CD4-positive, alpha-beta T cell (primary cell): ENCODE measurements at regions of chr9 and their contacts with region 1.

Region 1: DNA sequence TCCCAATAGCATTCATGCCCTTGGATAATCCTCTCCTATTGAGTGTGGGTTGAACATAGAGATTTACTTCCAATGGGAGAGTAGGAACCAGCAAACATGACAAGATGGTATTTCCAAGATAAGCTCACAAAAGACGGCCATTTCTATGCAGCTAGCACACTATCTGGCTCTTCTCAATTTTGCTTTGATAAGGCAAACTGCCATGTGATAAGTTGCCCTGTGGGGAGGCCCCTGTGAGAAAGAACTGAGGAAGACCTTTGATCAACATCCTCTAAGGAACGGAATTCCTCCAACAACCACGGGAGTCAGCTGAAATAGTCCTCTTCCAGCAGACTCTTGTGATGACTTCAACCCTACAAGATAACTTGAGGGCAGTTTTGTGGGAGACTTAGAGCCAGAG is 211.9 kb upstream of the TRPM3 start:
- DNase-seq: no peak
- ATAC-seq: no peak
- H3K4me3 ChIP-seq: no peak overlapping the region
- H3K4me3 Mint-ChIP-seq: no peak overlapping the region
- H3K27ac ChIP-seq: no peak overlapping the region
- H3K27ac Mint-ChIP-seq: no peak overlapping the region
- H3K4me1 ChIP-seq: no peaks in the 10 kb centered on the region
- H3K4me1 Mint-ChIP-seq: no peaks in the 10 kb centered on the region
- H3K27me3 ChIP-seq: peaks cover 0 to 15% of the 10 kb centered on the region in 2 experiments
- H3K27me3 Mint-ChIP-seq: peaks cover 24% of the 10 kb centered on the region
- CTCF ChIP-seq: no peak

Region 2: GRCh38 chr9:71249729-71250317 is 83.5 kb before region 1 on chr9:
- CTCF ChIA-PET with region 1: no interaction called
- POLR2A ChIA-PET with region 1: no interaction called
- intact Hi-C with region 1: no loop called
- DNase-seq: peak in 4 of 14 experiments; percentile 2 to 14 (median 10)
- ATAC-seq: no peak
- H3K4me3 ChIP-seq: no peak overlapping the region
- H3K4me3 Mint-ChIP-seq: no peak overlapping the region
- H3K27ac ChIP-seq: no peak overlapping the region
- H3K27ac Mint-ChIP-seq: no peak overlapping the region
- H3K4me1 ChIP-seq: no peaks in the 10 kb centered on the region
- H3K4me1 Mint-ChIP-seq: no peaks in the 10 kb centered on the region
- H3K27me3 ChIP-seq: no peaks in the 10 kb centered on the region
- H3K27me3 Mint-ChIP-seq: peaks cover 5% of the 10 kb centered on the region
- CTCF ChIP-seq: peak; percentile 24

Region 3: DNA sequence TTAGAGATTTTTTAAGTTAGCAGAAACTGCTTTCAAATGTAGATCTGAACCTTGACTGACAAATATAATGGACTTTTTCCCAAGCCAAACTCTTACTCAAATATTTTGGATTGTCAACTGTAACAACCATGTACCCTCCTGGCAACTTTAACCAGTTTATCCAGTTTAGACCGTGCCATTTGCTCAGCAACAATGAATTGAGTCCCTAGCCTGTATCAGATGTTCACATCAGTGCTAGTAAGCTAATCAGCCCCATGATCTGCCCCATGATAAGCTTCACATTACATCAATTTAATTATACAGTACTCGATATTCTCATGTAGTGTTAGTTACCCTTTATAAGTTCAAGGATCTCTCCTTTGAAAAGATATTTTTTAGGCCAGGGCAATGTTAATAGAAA is 64.5 kb after region 1 on chr9:
- CTCF ChIA-PET with region 1: no interaction called
- POLR2A ChIA-PET with region 1: no interaction called
- intact Hi-C with region 1: loop called in 1 of 2 experiments (anchors 10 kb)
- DNase-seq: no peak
- ATAC-seq: no peak
- H3K4me3 ChIP-seq: no peak overlapping the region
- H3K4me3 Mint-ChIP-seq: no peak overlapping the region
- H3K27ac ChIP-seq: no peak overlapping the region
- H3K27ac Mint-ChIP-seq: no peak overlapping the region
- H3K4me1 ChIP-seq: no peaks in the 10 kb centered on the region
- H3K4me1 Mint-ChIP-seq: no peaks in the 10 kb centered on the region
- H3K27me3 ChIP-seq: peaks cover 0 to 3% of the 10 kb centered on the region in 2 experiments
- H3K27me3 Mint-ChIP-seq: peaks cover 4% of the 10 kb centered on the region
- CTCF ChIP-seq: no peak